Posterior vena cava (tissue), 2 donors: ENCODE measurements at regions of chr12 and their contacts with region 1.

Region 1: DNA sequence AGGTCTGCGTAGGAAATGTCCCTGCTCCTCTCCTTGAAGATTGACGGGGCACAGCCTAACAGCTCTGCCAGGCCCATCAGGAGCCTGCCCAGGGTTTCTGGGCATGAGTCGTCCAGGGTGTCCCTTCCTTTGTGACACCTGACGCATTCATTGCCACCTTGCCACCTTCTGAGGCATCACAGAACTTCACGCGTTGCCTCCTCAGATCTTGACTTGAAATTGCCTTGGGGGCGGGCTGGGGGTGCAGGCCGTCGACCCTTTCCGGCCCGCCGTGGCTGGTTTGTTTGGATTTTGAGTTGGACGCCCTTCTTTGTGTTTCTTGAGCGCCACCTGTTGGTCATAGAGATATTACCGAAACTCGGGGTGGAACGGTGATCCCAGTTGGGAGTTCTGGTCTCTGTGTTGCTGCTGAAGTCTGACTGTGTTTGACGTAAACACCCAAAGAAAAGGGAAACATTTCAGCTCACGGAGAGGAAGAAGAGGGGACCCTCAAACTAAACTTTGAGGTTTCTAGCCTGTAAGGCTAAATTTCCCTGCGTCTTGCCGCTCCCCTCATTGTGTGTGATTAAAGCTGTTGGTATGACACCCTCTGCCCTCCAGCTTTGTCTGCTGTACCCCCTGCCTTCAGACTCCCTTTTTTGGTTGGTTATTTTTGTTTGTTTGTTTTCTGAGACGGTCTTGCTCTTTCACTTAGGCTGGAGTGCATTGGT is 44.6 kb downstream of the MLXIP start:
- DNase-seq: peak; percentile 84

Region 2: GRCh38 chr12:121917979-121918678 is 205.1 kb before region 1 on chr12 and contains the start of gene CFAP251:
- intact Hi-C with region 1: loop called in 1 of 2 experiments (anchors 10 kb)
- DNase-seq: peak; percentile 98
- total RNA-seq, gene CFAP251: 0.65 to 1.9 TPM

Region 3: GRCh38 chr12:122054842-122055520 is 68.2 kb before region 1 on chr12:
- intact Hi-C with region 1: loop called (anchors 1 to 2 kb)
- DNase-seq: no peak